ENCODE measurements at regions of chr4 and their contacts with region 1.

Region 1: DNA sequence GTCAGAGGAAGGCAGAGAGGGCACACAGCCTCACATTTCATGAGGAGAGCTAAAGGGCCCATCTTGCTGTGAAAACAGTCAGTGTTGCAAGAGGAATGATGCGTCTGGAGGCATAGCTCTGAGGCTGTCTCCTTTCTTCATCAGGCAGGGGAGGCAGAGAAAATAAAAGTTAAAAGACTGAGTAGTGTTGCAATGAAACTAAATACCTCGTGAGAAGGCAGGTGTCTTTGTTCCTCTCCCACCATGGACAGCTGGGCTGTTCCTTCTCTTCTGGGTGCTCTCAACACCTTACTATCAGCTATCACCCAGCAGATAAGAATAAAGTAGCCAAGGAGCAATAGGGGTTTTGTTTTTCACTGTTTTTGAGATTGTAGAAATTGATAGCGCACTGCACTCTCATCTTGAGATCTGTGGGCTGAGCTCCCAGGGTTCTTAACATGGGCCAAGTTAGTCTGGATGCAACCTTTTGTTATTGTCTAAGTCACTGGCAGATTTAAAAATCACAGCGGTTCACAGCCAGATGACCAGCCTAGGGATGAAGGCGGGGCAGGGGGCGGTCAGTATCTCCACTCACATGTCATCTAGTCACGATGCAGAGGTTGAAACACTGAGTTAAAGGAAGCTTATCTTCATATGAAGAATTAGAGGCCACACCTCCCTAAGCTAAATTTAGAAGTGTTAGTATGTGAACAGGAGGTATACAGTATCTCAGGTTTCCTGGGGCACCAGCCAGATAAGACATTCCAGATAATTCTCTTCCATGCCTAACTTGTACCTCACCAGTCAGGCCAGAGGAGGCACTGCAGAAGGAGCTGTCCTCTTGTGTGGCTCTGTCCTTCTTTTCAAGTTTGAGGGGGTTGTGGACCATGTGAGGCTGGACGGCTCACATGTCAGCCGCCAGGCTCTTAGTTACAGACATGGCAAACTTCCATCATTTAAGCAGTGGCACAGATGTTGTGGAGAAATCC is 36.9 kb downstream of the PARM1 start:
- DNase-seq: no peak
- ATAC-seq: no peak
- H3K4me3 ChIP-seq: no peak overlapping the region
- H3K27ac ChIP-seq: 0 out of 2 replicates have a peak overlapping the region, but pooled peaks have one; percentile 38
- H3K4me1 ChIP-seq: peaks cover 23% of the 10 kb centered on the region
- H3K27me3 ChIP-seq: no peaks in the 10 kb centered on the region
- CTCF ChIP-seq: peak in 2 of 3 experiments; percentile 17 to 19; a peak in 1 of 6 replicates
- EP300 ChIP-seq: no peak
- POLR2A ChIP-seq: no peak
- RAD21 ChIP-seq: no peak

Region 2: GRCh38 chr4:74953647-74954046 is 16.1 kb before region 1 on chr4:
- CTCF ChIA-PET with region 1: interaction called, 10 read pairs
- POLR2A ChIA-PET with region 1: no interaction called
- RAD21 ChIA-PET with region 1: interaction called, 5 read pairs
- SMC1A ChIA-PET with region 1: interaction called, 3 read pairs
- in situ Hi-C with region 1: no loop called
- intact Hi-C with region 1: no loop called
- DNase-seq: no peak
- ATAC-seq: no peak
- H3K4me3 ChIP-seq: no peak overlapping the region
- H3K27ac ChIP-seq: no peak overlapping the region
- H3K4me1 ChIP-seq: no peaks in the 10 kb centered on the region
- H3K27me3 ChIP-seq: no peaks in the 10 kb centered on the region
- CTCF ChIP-seq: no peak
- EP300 ChIP-seq: no peak
- POLR2A ChIP-seq: no peak
- RAD21 ChIP-seq: no peak

Region 3: GRCh38 chr4:75036046-75036830 is 66.4 kb after region 1 on chr4:
- CTCF ChIA-PET with region 1: no interaction called
- POLR2A ChIA-PET with region 1: no interaction called
- RAD21 ChIA-PET with region 1: interaction called, 4 read pairs
- SMC1A ChIA-PET with region 1: no interaction called
- in situ Hi-C with region 1: no loop called
- intact Hi-C with region 1: loop called (anchors 2 kb)
- DNase-seq: peak; percentile 23
- ATAC-seq: peak; percentile 59
- H3K4me3 ChIP-seq: no peak overlapping the region
- H3K27ac ChIP-seq: no peak overlapping the region
- H3K4me1 ChIP-seq: peaks cover 6% of the 10 kb centered on the region
- H3K27me3 ChIP-seq: no peaks in the 10 kb centered on the region
- CTCF ChIP-seq: no peak
- EP300 ChIP-seq: no peak
- POLR2A ChIP-seq: no peak
- RAD21 ChIP-seq: no peak